Ascending aorta (tissue), 2 donors: ENCODE measurements at regions of chr1 and their contacts with region 1.

Region 1: DNA sequence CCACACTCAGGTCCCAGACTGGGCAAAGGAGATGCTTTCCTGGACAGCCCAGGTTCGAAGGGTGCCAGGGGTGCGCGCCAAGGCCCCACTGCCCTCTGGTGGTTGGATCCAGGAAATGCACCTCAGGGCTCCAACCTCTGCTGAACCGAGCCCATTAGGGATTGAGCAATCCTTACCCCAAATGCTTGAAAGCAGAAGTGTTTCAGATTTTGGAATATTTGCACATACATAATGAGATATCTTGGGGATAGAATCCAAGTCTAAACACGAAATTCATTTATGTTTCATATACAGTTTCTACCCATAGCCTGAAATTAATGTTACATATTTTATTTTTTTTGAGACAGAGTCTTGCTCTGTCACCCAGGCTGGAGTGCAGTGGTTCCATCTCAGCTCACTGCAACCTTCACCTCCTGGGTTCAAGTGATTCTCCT is 57.4 kb downstream of the SLC9A1 start:
- DNase-seq: peak in 1 of 2 donors; percentile 90
- H3K4me3 ChIP-seq: no peak overlapping the region
- H3K27ac ChIP-seq: no peak overlapping the region
- H3K4me1 ChIP-seq: peaks cover 16 to 22% of the 10 kb centered on the region in 2 donors
- H3K27me3 ChIP-seq: no peaks in the 10 kb centered on the region
- CTCF ChIP-seq: peak; percentile 95 to 98 (median 97)

Region 2: DNA sequence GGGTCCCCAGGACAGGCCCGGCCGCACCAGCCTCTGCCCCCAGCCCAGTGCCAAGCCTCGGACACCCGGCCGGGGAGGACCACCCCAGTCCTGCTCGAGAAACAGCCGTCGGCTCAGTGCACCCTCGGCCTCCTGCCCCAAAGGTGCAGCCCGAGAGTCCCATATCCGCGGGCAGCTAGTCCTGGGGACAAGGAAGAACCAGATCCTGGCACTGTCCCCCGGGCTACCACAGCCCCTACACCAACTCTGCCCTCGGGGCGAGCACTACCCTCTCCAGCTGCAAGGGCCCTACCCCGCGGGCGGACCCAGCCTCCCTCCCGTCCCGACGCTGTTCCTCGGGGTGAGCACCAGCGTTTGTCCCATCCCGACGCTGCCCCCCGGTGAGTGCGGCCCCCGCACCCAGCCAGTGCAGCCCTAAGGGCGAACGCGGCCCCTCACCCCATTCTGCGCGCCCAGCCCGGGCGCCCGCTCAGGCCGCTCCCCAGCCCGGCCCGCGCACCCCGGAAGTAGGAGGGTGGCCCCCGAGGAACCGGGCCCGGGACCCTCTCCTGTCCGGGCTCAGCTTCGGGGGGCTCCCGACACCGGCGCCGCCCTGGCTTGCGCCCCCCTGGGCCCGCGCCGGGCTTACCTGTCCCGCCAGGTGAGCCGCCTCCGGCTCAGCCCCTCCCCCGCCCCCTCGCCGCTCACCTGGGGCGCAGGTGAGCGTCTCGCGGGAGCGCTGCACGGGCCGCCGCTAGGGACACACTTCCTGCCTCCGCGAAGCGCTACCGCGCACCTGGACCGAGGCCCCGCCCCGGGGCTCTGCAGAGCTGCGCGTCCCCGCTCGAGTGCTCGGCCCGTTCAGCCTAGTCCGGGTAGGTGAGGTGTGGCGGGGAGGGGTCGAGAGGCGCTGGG is 137.5 kb before region 1 on chr1 and contains the start of gene KDF1:
- intact Hi-C with region 1: loop called (anchors 10 kb)
- DNase-seq: no peak
- H3K4me3 ChIP-seq: peak within 1 kb of the TSS; percentile 37 to 46
- H3K27ac ChIP-seq: no peak within 1 kb of the TSS
- H3K4me1 ChIP-seq: peaks cover 5 to 9% of the 10 kb centered on the region in 2 donors
- H3K27me3 ChIP-seq: peaks cover 16% of the 10 kb centered on the region
- CTCF ChIP-seq: no peak
- total RNA-seq, gene KDF1: not detected

Region 3: GRCh38 chr1:27044613-27045151 is 52.8 kb before region 1 on chr1:
- intact Hi-C with region 1: loop called (anchors 1 kb)
- DNase-seq: peak; percentile 43 to 94
- H3K4me3 ChIP-seq: peak overlapping the region; percentile 24 to 43
- H3K27ac ChIP-seq: no peak overlapping the region
- H3K4me1 ChIP-seq: peaks cover 5 to 7% of the 10 kb centered on the region in 2 donors
- H3K27me3 ChIP-seq: no peaks in the 10 kb centered on the region
- CTCF ChIP-seq: peak; percentile 94 to 98 (median 95)